Endothelial cell of umbilical vein (primary cell): ENCODE measurements at regions of chr9 and their contacts with region 1.

Region 1: DNA sequence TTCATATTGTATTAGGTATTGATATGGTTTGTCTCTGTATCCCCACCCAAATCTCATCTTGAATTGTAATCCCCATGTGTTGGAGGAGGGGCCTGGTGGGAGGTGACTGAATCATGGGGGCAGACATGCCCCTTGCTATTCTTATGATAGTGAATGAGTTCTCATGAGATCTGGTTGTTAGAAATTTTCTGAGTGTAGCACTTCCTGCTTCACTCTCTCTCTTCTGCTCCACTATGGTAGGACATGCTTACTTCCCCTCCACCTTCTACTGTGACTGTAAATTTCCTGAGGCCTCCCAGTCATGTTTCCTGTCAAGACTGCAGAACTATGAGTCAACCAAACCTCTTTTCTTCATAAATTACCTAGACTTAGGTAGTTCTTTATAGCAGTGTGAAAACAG is 187.4 kb upstream of the SLC24A2 start:
- DNase-seq: peak; percentile 63
- H3K4me3 ChIP-seq: no peak overlapping the region
- H3K27ac ChIP-seq: peak overlapping the region; percentile 66
- H3K4me1 ChIP-seq: peaks cover 19% of the 10 kb centered on the region
- H3K27me3 ChIP-seq: no peaks in the 10 kb centered on the region
- CTCF ChIP-seq: no peak
- POLR2A ChIP-seq: no peak

Region 2: GRCh38 chr9:19999491-20000057 is 23.3 kb after region 1 on chr9:
- CTCF ChIA-PET with region 1: interaction called, 3 read pairs
- POLR2A ChIA-PET with region 1: no interaction called
- dilution Hi-C with region 1: no loop called
- intact Hi-C with region 1: loop called (anchors 1 kb)
- DNase-seq: peak; percentile 76
- H3K4me3 ChIP-seq: no peak overlapping the region
- H3K27ac ChIP-seq: peak overlapping the region; percentile 66
- H3K4me1 ChIP-seq: peaks cover 30% of the 10 kb centered on the region
- H3K27me3 ChIP-seq: no peaks in the 10 kb centered on the region
- CTCF ChIP-seq: no peak
- POLR2A ChIP-seq: no peak

Region 3: DNA sequence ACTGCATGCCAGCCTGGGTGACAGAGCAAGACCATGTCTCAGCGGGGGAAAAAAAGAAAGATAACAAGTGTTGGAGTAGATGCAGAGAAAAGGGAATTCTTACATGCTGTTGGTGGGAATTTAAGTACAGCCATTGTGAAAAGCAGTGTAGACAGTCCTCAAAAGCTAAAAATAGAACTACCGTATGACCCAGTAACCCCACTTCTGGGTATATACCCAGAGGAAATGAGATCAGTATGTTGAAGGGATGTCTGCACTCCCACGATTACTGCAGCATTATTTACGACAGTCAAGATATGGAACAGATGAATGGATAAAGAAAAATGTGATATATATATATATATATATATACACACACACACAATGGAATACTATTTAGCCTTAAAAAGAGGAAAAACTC is 37.9 kb after region 1 on chr9:
- CTCF ChIA-PET with region 1: no interaction called
- POLR2A ChIA-PET with region 1: no interaction called
- dilution Hi-C with region 1: no loop called
- intact Hi-C with region 1: loop called (anchors 1 kb)
- DNase-seq: peak; percentile 46
- H3K4me3 ChIP-seq: no peak overlapping the region
- H3K27ac ChIP-seq: peak overlapping the region; percentile 20
- H3K4me1 ChIP-seq: peaks cover 12% of the 10 kb centered on the region
- H3K27me3 ChIP-seq: no peaks in the 10 kb centered on the region
- CTCF ChIP-seq: no peak
- POLR2A ChIP-seq: no peak